Spleen (tissue), 13 donors: ENCODE measurements at regions of chr3 and their contacts with region 1.

Region 1: GRCh38 chr3:44976002-44976815 is at the starts of genes EXOSC7 and ZDHHC3:
- DNase-seq: peak; percentile 98
- H3K4me3 ChIP-seq: peak within 1 kb of the TSS; percentile 76 to 96 (median 88)
- H3K27ac ChIP-seq: peak within 1 kb of the TSS; percentile 75 to 95 (median 90)
- H3K4me1 ChIP-seq: peaks cover 23 to 90% (median 62%) of the 10 kb centered on the region in 6 donors
- H3K27me3 ChIP-seq: no peaks in the 10 kb centered on the region
- CTCF ChIP-seq: peak in 2 of 11 experiments; percentile 36 to 42
- POLR2A ChIP-seq: peak in 1 of 3 donors; percentile 12
- total RNA-seq, gene EXOSC7: 28.4 to 42.8 (median 33.6) TPM
- total RNA-seq, gene ZDHHC3: 57.3 to 79.2 (median 70.1) TPM

Region 2: DNA sequence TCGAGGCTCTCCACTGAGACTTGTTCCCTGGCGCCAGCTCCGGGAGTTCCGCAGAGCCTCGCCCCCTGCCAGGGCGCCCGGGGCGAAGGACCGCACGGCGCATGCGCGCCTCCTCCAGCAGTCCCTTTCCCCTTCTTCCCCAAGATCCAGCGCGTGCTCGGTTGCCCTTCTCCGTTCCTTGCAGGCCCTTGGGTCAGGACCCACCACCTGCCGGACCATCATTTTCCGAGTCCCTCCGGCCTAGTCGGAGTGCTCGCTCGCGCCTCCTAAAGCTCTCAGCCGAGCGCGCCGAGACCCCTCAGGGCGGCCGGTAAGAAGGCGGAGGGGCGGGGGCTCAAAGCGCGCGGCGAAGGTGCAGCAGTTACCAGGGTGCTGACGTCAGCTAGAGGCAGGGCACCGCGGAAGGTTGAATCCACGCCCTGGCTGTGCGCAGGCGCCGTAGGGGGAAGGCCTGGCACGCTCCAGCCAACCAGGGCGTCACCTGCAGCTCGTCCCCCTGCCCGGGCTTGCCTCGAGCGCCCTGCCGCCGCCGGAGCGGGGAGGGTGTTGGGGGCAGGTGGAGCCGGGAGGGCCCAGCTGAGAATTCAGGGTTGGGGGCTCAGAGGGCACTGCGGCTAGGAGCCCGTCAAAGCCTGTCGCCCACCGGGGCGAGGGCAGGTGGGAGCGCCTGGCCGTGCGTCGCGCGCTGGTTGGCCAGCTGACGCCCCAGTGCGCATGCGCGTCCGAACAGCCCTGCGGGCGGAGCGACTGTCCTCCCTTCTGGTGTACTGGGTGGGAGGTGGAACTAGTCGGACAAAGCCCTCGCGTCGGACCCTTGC is 638.0 kb before region 1 on chr3 and contains the start of gene TCAIM:
- intact Hi-C with region 1: loop called (anchors 5 kb)
- DNase-seq: peak; percentile 100
- H3K4me3 ChIP-seq: peak within 1 kb of the TSS; percentile 58 to 89 (median 74)
- H3K27ac ChIP-seq: peak within 1 kb of the TSS; percentile 94 to 98 (median 98)
- H3K4me1 ChIP-seq: peaks cover 0 to 49% (median 37%) of the 10 kb centered on the region in 6 donors
- H3K27me3 ChIP-seq: no peaks in the 10 kb centered on the region
- CTCF ChIP-seq: peak in 1 of 11 experiments; percentile 17
- POLR2A ChIP-seq: peak in 2 of 3 donors; percentile 18 to 84
- total RNA-seq, gene TCAIM: 17.0 to 31.7 (median 28.3) TPM

Region 3: DNA sequence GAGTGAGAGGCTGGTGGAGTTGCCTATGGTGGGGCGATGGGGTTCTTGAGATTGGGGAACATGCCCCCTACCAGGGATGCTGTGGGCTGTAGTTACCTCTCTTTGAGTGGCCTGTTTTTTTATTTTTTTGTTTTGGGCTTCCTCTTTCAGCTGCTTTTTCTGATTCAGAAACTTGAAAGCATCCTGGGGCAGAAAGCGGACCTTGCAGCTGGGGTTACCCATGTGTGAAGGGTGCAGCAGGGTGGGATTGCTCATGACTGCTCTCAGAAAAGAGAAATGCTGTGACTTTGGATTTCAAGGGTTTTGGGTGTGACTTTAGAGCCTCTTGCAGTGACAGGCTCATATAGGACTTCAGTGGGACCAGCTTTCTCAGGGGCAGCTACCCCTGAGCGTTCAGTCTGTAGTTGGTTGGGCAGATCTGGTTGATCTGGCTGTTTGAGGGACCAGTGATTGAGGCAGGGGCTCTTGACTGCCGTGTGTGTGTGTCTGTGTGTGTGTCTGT is 620.1 kb after region 1 on chr3:
- intact Hi-C with region 1: no loop called
- DNase-seq: peak; percentile 88
- H3K4me3 ChIP-seq: peak overlapping the region; percentile 25 to 94 (median 78)
- H3K27ac ChIP-seq: peak overlapping the region; percentile 35 to 96 (median 79)
- H3K4me1 ChIP-seq: peaks cover 66 to 91% (median 84%) of the 10 kb centered on the region in 6 donors
- H3K27me3 ChIP-seq: no peaks in the 10 kb centered on the region
- CTCF ChIP-seq: no peak
- POLR2A ChIP-seq: no peak